ENCODE measurements at regions of chr1 and their contacts with region 1.

Region 1: DNA sequence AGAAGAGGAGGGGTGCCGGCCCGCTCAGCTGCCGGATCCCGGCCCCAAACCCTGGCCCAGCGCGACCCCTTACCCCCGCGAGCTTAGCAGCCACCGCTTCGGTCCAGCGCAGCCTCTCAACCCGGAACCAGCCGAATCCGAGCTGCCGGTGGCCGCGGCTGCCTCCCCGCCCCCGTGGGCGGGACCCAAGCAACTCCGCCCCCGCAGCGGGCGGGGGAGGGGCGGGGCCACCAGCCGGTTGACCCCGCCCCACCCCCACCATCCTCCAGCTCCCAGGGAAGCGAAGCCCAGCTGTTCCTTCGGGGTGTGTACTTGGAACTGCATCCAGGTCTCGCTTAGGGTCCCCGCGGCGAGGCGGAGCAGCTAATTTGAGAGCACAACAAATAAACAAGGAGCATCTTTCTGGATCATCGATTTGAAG is at the start of gene TRIM62:
- DNase-seq: peak; percentile 70 to 77 (median 70)
- H3K4me3 ChIP-seq: peak within 1 kb of the TSS; percentile 74 to 92 (median 76)
- H3K4me3 Mint-ChIP-seq: peak within 1 kb of the TSS; percentile 86 to 89
- H3K27ac ChIP-seq: peak within 1 kb of the TSS in 1 of 2 donors; percentile 18
- H3K27ac Mint-ChIP-seq: peak within 1 kb of the TSS in 5 of 7 donors; percentile 48 to 75 (median 56)
- H3K4me1 ChIP-seq: peaks cover 11 to 23% of the 10 kb centered on the region in 2 donors
- H3K4me1 Mint-ChIP-seq: peaks cover 24% of the 10 kb centered on the region
- H3K27me3 ChIP-seq: peaks cover 9 to 14% of the 10 kb centered on the region in 2 donors
- H3K27me3 Mint-ChIP-seq: peaks cover 11 to 26% (median 15%) of the 10 kb centered on the region in 3 donors
- CTCF ChIP-seq: no peak
- polyA plus RNA-seq, gene TRIM62: 1.7 to 8.1 (median 2.1) TPM

Region 2: DNA sequence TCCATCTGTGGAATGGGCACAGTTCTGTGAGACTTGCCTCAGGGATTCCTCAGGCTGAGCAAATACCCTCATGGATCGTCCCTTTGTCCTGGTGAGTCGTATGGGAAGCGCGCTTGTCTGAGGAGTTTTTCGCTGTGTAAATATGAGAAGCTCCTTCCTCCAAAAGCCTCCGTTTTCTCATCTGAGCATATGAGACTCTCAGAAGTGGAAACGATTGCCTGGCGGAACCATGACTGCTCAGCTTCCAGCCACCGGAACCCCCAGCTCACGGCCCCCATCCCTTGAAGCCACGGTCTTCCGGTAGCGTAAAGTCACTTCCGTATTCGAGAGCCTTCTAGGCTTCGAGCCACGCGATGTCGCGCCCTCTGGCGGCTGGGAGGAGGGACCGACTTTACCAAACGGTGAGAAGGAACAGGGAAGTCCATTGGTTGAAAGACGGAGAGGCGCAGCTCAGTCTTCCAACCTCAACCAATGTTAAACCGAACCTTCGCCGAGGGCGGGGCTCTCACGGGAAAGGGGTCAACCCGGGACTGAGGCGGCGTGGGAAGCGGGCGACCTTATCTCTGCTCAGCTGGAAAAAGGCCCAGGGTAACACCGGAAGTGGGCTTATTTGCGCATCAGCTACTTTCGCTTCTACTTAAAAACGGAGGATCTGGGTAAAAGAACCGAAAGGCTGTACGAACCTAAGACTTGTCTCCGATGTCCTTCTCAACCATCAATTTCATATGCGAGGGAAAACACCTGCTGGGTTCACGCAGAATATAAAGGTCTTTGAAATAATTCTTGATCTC is 54.7 kb before region 1 on chr1:
- intact Hi-C with region 1: loop called in 1 of 2 experiments (anchors 10 kb)
- DNase-seq: peak; percentile 99
- H3K4me3 ChIP-seq: peak overlapping the region; percentile 64 to 93 (median 84)
- H3K4me3 Mint-ChIP-seq: peak overlapping the region; percentile 91 to 94
- H3K27ac ChIP-seq: peak overlapping the region; percentile 34 to 93
- H3K27ac Mint-ChIP-seq: peak overlapping the region; percentile 87 to 96 (median 93)
- H3K4me1 ChIP-seq: peaks cover 13 to 19% of the 10 kb centered on the region in 2 donors
- H3K4me1 Mint-ChIP-seq: peaks cover 23% of the 10 kb centered on the region
- H3K27me3 ChIP-seq: no peaks in the 10 kb centered on the region
- H3K27me3 Mint-ChIP-seq: peaks cover 4 to 12% (median 11%) of the 10 kb centered on the region in 3 donors
- CTCF ChIP-seq: peak; percentile 86

Region 3: DNA sequence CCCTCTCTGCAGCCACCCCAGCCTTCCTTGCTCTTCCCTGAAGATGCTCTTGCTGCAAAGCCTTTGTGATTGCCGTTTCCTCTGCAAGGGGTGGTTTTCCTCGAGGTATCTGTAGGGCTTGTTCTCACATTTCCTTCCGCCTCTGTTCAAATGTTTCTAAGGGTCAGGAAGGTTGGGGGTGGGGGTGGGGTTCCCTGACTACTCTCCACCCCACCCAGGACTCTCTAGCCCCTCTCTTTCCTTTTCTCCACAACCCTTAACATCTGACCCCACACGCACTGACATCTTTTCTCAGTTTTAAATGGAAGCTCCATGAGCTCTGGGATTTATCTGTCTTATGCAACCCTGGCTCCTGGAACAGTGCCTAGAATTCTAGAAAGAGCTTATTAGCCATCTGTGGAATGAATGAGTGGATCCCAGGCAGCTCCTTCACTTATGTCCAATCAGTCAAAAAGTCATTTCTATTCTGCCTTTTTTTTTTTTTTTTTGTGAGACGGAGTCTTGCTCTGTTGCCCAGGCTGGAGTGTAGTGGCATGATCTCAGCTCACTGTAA is 47.1 kb after region 1 on chr1:
- intact Hi-C with region 1: no loop called
- DNase-seq: no peak
- H3K4me3 ChIP-seq: no peak overlapping the region
- H3K4me3 Mint-ChIP-seq: no peak overlapping the region
- H3K27ac ChIP-seq: no peak overlapping the region
- H3K27ac Mint-ChIP-seq: no peak overlapping the region
- H3K4me1 ChIP-seq: no peaks in the 10 kb centered on the region
- H3K4me1 Mint-ChIP-seq: no peaks in the 10 kb centered on the region
- H3K27me3 ChIP-seq: peaks cover 0 to 3% of the 10 kb centered on the region in 2 donors
- H3K27me3 Mint-ChIP-seq: peaks cover 7 to 18% (median 10%) of the 10 kb centered on the region in 3 donors
- CTCF ChIP-seq: no peak

Region 4: GRCh38 chr1:33349778-33350610 is 168.1 kb after region 1 on chr1:
- intact Hi-C with region 1: loop called in 1 of 2 experiments (anchors 2 kb)
- DNase-seq: peak; percentile 82 to 84 (median 83)
- H3K4me3 ChIP-seq: peak overlapping the region; percentile 34 to 73 (median 50)
- H3K4me3 Mint-ChIP-seq: peak overlapping the region; percentile 87 to 93
- H3K27ac ChIP-seq: peak overlapping the region; percentile 90
- H3K27ac Mint-ChIP-seq: peak overlapping the region; percentile 96 to 99 (median 98)
- H3K4me1 ChIP-seq: peaks cover 37 to 52% of the 10 kb centered on the region in 2 donors
- H3K4me1 Mint-ChIP-seq: peaks cover 50% of the 10 kb centered on the region
- H3K27me3 ChIP-seq: no peaks in the 10 kb centered on the region
- H3K27me3 Mint-ChIP-seq: peaks cover 0 to 8% (median 3%) of the 10 kb centered on the region in 3 donors
- CTCF ChIP-seq: no peak

Measured in CD14-positive monocyte (primary cell).